ENCODE measurements at regions of chrX and their contacts with region 1.

Region 1: GRCh38 chrX:153953342-153953830 is 8.9 kb upstream of the RENBP start:
- DNase-seq: peak; percentile 60 to 77 (median 65)
- ATAC-seq: peak; percentile 34 to 76 (median 68)
- H3K4me3 ChIP-seq: no peak overlapping the region
- H3K27ac ChIP-seq: peak overlapping the region in 7 of 12 donors; percentile 32 to 86 (median 49)
- H3K4me1 ChIP-seq: peaks cover 0 to 26% (median 5%) of the 10 kb centered on the region in 12 donors
- H3K27me3 ChIP-seq: no peaks in the 10 kb centered on the region
- CTCF ChIP-seq: peak; percentile 78 to 99 (median 88)
- POLR2A ChIP-seq: no peak

Region 2: GRCh38 chrX:153539171-153539978 is 414.0 kb before region 1 on chrX:
- intact Hi-C with region 1: loop called in 1 of 10 experiments (anchors 10 kb)
- DNase-seq: peak; percentile 45 to 84 (median 73)
- ATAC-seq: peak; percentile 68 to 91 (median 86)
- H3K4me3 ChIP-seq: no peak overlapping the region
- H3K27ac ChIP-seq: no peak overlapping the region
- H3K4me1 ChIP-seq: peaks cover 0 to 3% (median 0%) of the 10 kb centered on the region in 12 donors
- H3K27me3 ChIP-seq: peaks cover 0 to 11% (median 0%) of the 10 kb centered on the region in 9 donors
- CTCF ChIP-seq: peak; percentile 61 to 91 (median 76)
- POLR2A ChIP-seq: no peak

Region 3: GRCh38 chrX:153763989-153764755 is 189.2 kb before region 1 on chrX and contains the start of gene PLXNB3:
- intact Hi-C with region 1: loop called (anchors 1 to 5 kb)
- DNase-seq: peak; percentile 66 to 88 (median 75)
- ATAC-seq: peak; percentile 52 to 89 (median 81)
- H3K4me3 ChIP-seq: peak within 1 kb of the TSS in 3 of 12 donors; percentile 3 to 21 (median 19)
- H3K27ac ChIP-seq: peak within 1 kb of the TSS in 7 of 12 donors; percentile 9 to 81 (median 28)
- H3K4me1 ChIP-seq: peaks cover 0 to 26% (median 5%) of the 10 kb centered on the region in 12 donors
- H3K27me3 ChIP-seq: peaks cover 0 to 4% (median 0%) of the 10 kb centered on the region in 9 donors
- CTCF ChIP-seq: peak; percentile 68 to 93 (median 78)
- POLR2A ChIP-seq: no peak
- total RNA-seq, gene PLXNB3: 1.6 to 8.6 (median 3.5) TPM

Region 4: DNA sequence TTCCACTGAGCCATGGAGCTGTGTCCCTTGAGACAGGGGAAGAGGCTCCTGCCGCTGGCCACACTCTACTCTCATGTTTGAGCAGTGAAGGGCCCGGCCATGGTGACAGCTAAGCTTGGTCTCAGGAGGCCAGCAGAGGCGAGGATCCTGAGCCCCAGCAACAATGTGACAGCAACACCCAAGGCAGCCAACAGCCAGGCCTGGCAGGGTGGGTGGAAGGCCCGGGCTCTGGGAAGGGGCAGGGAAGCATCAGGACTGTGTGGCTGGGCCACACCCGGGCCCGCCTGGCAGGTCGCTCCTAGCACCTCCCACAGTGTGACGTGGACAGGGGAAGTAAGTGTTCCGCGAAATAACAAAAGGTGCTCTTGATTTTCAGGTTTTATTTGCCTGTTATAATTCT is 92.2 kb before region 1 on chrX:
- intact Hi-C with region 1: no loop called
- DNase-seq: no peak
- ATAC-seq: no peak
- H3K4me3 ChIP-seq: no peak overlapping the region
- H3K27ac ChIP-seq: no peak overlapping the region
- H3K4me1 ChIP-seq: no peaks in the 10 kb centered on the region
- H3K27me3 ChIP-seq: peaks cover 0 to 44% (median 0%) of the 10 kb centered on the region in 9 donors
- CTCF ChIP-seq: no peak
- POLR2A ChIP-seq: no peak

Measured in heart left ventricle (tissue), 16 donors.